ENCODE measurements at regions of chr11 and their contacts with region 1.

Region 1: GRCh38 chr11:65261591-65262380 is at the start of gene POLA2:
- DNase-seq: peak; percentile 96
- H3K4me3 Mint-ChIP-seq: peak within 1 kb of the TSS; percentile 95
- H3K27ac Mint-ChIP-seq: peak within 1 kb of the TSS; percentile 92
- H3K4me1 Mint-ChIP-seq: peaks cover 60% of the 10 kb centered on the region
- H3K27me3 Mint-ChIP-seq: no peaks in the 10 kb centered on the region
- total RNA-seq, gene POLA2: 42.0 to 51.1 TPM

Region 2: DNA sequence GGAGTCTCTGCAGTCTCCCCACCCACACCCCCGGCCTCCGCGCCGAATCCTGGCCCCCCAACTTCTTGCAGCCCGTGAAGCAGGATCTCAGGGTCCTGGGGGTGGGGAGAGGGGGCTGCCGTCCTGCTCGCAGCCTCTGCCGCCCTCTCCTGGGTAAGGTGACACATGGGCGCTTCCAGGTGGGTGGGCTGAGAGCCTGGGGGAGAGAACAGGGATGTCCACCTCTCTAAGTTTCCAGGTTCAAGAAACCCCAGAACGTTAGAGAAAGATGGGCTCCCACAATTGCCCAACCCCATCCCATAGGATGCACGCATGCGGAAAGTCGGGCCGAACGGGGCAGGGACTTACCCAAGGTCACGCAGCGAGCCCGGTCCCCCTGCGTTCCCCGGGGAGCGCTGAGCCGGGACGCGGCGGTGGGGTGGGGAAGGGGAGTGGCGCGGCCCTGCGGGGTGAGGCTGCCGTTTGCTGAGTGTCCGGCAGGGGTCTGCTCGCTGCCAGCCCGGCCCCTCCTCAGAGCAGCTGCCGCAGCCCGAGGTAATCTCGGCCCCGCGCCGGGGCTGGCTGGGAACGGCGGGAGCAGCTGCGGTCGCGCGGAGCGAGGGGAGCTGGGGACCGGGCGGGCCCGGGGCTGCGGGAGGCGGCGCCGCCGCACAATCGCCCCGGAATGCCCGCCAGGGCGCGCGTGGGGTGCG is 80.8 kb before region 1 on chr11:
- CTCF ChIA-PET with region 1: no interaction called
- POLR2A ChIA-PET with region 1: interaction called, 21 read pairs
- DNase-seq: peak; percentile 65
- H3K4me3 Mint-ChIP-seq: peak overlapping the region; percentile 95
- H3K27ac Mint-ChIP-seq: peak overlapping the region; percentile 65
- H3K4me1 Mint-ChIP-seq: peaks cover 25% of the 10 kb centered on the region
- H3K27me3 Mint-ChIP-seq: no peaks in the 10 kb centered on the region

Region 3: DNA sequence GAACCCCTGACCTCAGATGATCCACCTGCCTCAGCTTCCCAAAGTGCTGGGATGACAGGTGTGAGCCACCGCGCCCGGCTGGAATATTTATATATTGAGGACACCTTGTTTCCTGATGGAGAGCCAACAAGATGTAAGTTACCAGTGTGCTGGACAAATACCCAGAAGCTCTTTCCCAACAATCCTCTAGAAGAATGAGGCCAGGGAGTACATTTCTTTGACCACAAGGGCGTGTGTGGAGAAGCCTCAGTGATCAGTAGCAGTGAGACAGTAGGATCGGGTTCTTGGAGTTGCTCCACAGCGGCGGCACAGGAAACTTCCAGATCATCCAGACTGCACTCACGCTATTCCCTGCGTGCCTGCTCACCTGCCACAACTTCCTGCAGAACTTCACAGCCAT is 10.3 kb before region 1 on chr11:
- CTCF ChIA-PET with region 1: interaction called, 5 read pairs
- POLR2A ChIA-PET with region 1: interaction called, 11 read pairs
- DNase-seq: no peak
- H3K4me3 Mint-ChIP-seq: no peak overlapping the region
- H3K27ac Mint-ChIP-seq: no peak overlapping the region
- H3K4me1 Mint-ChIP-seq: no peaks in the 10 kb centered on the region
- H3K27me3 Mint-ChIP-seq: peaks cover 14% of the 10 kb centered on the region

Region 4: DNA sequence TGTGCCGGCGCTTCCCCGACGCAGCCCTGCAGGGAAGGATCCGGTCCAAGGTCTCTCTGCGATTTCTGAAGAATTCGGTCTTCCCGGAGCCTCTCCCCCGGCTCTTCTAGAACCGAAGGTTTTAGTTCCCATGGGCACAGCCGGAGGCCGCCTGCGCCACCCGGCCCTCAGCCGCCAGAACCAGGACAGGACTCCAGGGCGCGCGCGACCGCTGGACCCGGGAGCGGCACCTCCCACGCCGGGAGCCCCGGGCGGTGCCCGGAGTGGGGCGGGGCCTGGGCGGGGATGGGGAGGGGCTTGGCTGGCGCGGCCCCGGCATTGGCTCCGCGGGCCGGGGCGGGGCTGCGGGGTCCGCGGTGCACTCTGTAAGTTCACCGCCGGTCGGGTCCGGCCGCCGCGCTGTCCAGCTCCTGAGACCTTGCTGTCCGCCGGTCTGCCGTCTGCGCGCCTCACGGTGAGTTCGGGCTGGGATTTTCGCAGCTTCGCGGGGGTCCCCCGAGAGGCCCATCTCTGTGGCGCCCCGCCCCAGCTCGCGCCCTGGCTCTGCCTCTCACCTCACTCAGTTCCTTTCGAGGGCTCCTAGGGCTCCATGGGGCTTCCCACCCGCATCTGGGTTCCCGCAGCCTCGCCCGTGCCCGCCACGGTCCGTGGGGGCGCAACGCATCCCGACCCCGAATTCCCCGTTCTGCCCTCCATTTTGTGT is 52.9 kb after region 1 on chr11 and contains the start of gene CDC42EP2:
- CTCF ChIA-PET with region 1: interaction called, 24 read pairs
- POLR2A ChIA-PET with region 1: interaction called, 28 read pairs
- DNase-seq: peak; percentile 81
- H3K4me3 Mint-ChIP-seq: peak within 1 kb of the TSS; percentile 69
- H3K27ac Mint-ChIP-seq: no peak within 1 kb of the TSS
- H3K4me1 Mint-ChIP-seq: peaks cover 11% of the 10 kb centered on the region
- H3K27me3 Mint-ChIP-seq: peaks cover 20% of the 10 kb centered on the region
- total RNA-seq, gene CDC42EP2: 0.38 to 0.70 TPM

Measured in activated CD4-positive, alpha-beta memory T cell treated with anti-CD3 and anti-CD28 coated beads, Interleukin-2, amount 10 ng/mL, durations not matched to agents 7 days and 5 days (primary cell).